ENCODE measurements at regions of chr17 and their contacts with region 1.

Region 1: DNA sequence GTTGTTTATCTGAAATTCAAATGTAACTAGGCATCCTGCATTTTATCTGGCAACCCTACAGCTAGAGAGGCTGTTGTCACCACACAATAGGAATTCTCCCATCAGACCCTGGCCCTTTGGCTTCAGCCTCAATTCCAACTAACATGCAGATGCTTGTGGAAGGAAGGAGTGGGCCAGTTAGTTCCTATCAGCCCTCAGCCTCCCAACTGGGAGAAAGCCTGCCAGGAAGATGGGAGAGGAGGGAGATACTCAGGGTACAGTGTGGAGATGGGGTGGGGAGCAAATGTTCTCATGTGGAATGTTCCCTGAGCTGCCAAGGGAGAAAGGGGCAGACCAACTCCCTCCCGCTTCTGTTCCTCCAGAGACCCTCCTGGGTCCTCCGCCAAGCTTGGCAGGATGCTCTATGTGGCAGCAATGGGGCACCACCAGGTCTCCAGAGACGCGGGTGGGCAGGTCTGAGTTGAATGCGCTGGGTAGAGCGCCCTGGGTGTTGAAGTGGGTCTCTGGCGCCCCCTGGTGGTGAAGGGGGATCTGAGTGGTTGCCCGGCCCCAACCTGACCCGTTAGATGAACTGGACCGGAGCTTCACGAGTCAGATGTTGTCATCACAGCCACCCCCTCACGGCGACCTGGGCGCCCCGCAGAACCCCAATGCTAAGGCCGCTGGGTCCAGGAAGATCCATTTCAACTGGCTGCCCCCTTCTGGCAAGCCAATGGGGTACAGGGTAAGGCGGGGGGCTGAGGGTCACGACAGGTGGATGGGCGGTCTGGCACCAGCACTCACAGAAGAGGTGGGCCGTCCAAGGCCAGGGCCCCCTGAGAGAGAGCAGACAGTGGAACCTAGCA is 15.2 kb downstream of the GALK1 start:
- DNase-seq: peak; percentile 92
- H3K4me3 Mint-ChIP-seq: no peak overlapping the region
- H3K27ac Mint-ChIP-seq: peak overlapping the region; percentile 18
- H3K4me1 Mint-ChIP-seq: peaks cover 14% of the 10 kb centered on the region
- H3K27me3 Mint-ChIP-seq: no peaks in the 10 kb centered on the region

Region 2: DNA sequence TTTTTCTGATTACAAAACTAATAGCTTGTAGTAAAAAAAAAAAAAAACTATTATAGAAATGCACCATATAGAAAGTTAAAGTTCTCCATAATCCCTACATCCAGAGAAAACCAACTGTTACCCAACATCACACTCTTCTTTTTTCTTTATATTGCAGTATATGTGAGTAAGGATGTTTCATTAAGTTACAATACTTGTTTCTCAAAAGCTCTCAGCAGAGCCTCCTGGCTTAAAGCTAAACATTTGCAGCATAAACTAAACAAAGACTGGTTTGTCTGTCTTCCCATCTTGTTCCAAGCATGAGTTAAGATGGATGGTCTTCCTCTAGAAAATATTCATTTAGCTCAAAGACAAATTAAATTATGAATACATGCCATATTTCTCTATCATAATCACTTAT is 369.5 kb before region 1 on chr17:
- CTCF ChIA-PET with region 1: no interaction called
- intact Hi-C with region 1: no loop called
- DNase-seq: no peak
- H3K4me3 Mint-ChIP-seq: no peak overlapping the region
- H3K27ac Mint-ChIP-seq: no peak overlapping the region
- H3K4me1 Mint-ChIP-seq: peaks cover 44% of the 10 kb centered on the region
- H3K27me3 Mint-ChIP-seq: no peaks in the 10 kb centered on the region

Region 3: GRCh38 chr17:75589012-75589918 is 160.5 kb before region 1 on chr17:
- CTCF ChIA-PET with region 1: interaction called, 6 read pairs
- intact Hi-C with region 1: loop called (anchors 5 kb)
- DNase-seq: peak; percentile 98
- H3K4me3 Mint-ChIP-seq: peak overlapping the region; percentile 76
- H3K27ac Mint-ChIP-seq: no peak overlapping the region
- H3K4me1 Mint-ChIP-seq: peaks cover 2% of the 10 kb centered on the region
- H3K27me3 Mint-ChIP-seq: peaks cover 2% of the 10 kb centered on the region

Region 4: DNA sequence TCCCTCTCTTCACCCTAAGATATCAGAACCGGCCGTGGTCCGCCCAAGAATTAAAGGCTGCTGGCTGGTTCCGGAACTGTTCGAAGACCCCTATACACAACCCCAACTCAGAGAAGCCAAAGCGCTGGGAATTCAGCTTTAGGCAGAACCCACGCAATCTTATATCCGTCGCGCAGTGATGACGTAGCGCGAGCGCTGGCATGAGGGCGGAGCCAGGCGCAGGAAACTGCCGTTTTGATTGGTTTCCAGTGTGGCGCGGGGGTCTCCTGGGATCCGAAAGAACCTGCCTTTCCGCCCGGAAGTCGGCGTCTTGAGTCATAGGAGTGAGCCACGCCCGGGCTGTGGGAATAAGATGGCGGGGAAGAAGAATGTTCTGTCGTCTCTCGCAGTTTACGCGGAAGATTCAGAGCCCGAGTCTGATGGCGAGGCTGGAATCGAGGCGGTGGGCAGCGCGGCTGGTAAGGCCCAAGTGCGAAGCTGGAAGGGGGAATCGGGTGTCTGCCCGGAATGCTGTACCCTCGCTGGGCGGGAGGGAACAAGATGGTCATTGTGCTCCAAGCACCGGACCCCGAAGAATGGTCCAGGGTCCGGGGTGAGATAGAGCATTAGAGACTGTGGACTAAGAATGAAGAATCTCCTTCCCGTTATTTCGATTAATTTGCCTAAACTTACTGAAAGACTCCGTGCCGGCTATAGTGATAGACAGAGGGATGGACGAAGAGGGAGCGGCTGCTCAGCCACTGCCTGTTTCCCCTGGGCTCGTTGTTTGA is 82.6 kb before region 1 on chr17 and contains the starts of genes RECQL5 and SAP30BP:
- CTCF ChIA-PET with region 1: interaction called, 127 read pairs
- intact Hi-C with region 1: loop called (anchors 2 kb)
- DNase-seq: peak; percentile 99
- H3K4me3 Mint-ChIP-seq: peak within 1 kb of the TSS; percentile 64
- H3K27ac Mint-ChIP-seq: no peak within 1 kb of the TSS
- H3K4me1 Mint-ChIP-seq: peaks cover 35% of the 10 kb centered on the region
- H3K27me3 Mint-ChIP-seq: no peaks in the 10 kb centered on the region
- total RNA-seq, gene RECQL5: 36.2 to 44.0 TPM
- total RNA-seq, gene SAP30BP: 68.3 TPM

Region 5: GRCh38 chr17:75689441-75689873 is 60.3 kb before region 1 on chr17:
- CTCF ChIA-PET with region 1: interaction called, 11 read pairs
- intact Hi-C with region 1: no loop called
- DNase-seq: peak; percentile 81
- H3K4me3 Mint-ChIP-seq: no peak overlapping the region
- H3K27ac Mint-ChIP-seq: peak overlapping the region; percentile 92
- H3K4me1 Mint-ChIP-seq: peaks cover 59% of the 10 kb centered on the region
- H3K27me3 Mint-ChIP-seq: no peaks in the 10 kb centered on the region

Region 6: DNA sequence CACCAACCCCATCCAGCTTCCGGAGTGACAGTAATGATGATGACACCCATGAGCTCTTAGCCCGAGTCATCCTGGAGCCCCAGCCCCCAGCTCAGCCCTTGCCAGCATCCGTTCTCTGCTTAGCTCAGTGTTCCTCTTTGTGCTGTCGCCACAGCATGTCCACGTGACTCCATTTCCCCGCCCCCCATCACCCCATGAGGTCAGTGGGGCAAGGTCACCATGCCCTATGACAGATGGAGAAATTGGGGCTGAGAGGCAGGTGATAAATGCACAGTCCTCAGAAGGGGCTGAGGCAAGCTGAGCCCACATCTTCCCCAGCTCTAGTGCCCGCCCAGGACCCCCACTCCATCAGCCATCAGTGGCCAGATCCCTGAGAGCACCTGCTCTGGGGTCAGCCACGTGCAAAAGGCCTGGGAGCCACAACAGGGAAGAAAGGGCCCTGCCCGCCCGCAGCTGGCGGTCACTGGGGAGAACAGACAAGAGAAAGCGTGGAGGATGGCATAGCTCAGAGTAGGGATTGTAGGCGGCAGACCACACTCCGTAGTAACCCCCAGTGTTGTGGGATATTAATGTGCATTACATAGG is 11.5 kb before region 1 on chr17:
- CTCF ChIA-PET with region 1: interaction called, 25 read pairs
- intact Hi-C with region 1: no loop called
- DNase-seq: peak; percentile 65
- H3K4me3 Mint-ChIP-seq: no peak overlapping the region
- H3K27ac Mint-ChIP-seq: no peak overlapping the region
- H3K4me1 Mint-ChIP-seq: peaks cover 3% of the 10 kb centered on the region
- H3K27me3 Mint-ChIP-seq: no peaks in the 10 kb centered on the region

Region 7: GRCh38 chr17:75827252-75828115 is 77.7 kb after region 1 on chr17:
- CTCF ChIA-PET with region 1: interaction called, 16 read pairs
- intact Hi-C with region 1: no loop called
- DNase-seq: peak; percentile 75
- H3K4me3 Mint-ChIP-seq: peak overlapping the region; percentile 29
- H3K27ac Mint-ChIP-seq: peak overlapping the region; percentile 80
- H3K4me1 Mint-ChIP-seq: peaks cover 18% of the 10 kb centered on the region
- H3K27me3 Mint-ChIP-seq: no peaks in the 10 kb centered on the region

Region 8: GRCh38 chr17:76005263-76006149 is 255.7 kb after region 1 on chr17:
- CTCF ChIA-PET with region 1: no interaction called
- intact Hi-C with region 1: loop called (anchors 10 kb)
- DNase-seq: peak; percentile 95
- H3K4me3 Mint-ChIP-seq: no peak overlapping the region
- H3K27ac Mint-ChIP-seq: no peak overlapping the region
- H3K4me1 Mint-ChIP-seq: no peaks in the 10 kb centered on the region
- H3K27me3 Mint-ChIP-seq: no peaks in the 10 kb centered on the region

Measured in activated naive CD4-positive, alpha-beta T cell treated with anti-CD3 and anti-CD28 coated beads for 36 hours (primary cell).